ENCODE measurements at regions of chr1 and their contacts with region 1.

Region 1: DNA sequence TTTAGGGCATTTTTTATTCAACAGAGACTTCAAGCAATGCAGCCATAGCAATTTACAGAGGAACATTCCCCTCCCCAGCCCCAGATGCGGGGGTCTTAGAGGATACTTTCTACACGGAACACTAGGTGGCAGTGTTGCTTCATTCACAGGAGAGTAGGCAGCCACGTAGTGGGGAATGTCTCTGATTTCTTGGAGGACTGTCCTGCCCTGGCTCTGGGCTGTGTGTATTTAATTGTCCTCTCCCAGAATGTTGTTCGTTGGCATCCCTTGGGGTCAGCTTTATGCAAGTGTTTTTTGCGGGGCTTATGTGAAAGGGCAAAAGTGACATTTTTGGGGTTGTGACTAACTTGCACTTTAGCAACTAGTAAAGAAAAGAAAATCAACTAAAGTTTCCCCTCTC is 96.9 kb downstream of the PAPPA2 start:
- DNase-seq: peak in 4 of 5 donors; percentile 28 to 51 (median 44)
- ATAC-seq: peak; percentile 88 to 95 (median 90)
- H3K4me3 ChIP-seq: no peak overlapping the region
- H3K27ac ChIP-seq: no peak overlapping the region
- H3K4me1 ChIP-seq: peaks cover 0 to 10% (median 0%) of the 10 kb centered on the region in 12 donors
- H3K27me3 ChIP-seq: peaks cover 0 to 16% (median 0%) of the 10 kb centered on the region in 9 donors
- CTCF ChIP-seq: peak; percentile 75 to 91 (median 84)
- POLR2A ChIP-seq: no peak

Region 2: GRCh38 chr1:176656257-176656995 is 96.5 kb after region 1 on chr1:
- intact Hi-C with region 1: loop called in 6 of 10 experiments (anchors 10 kb)
- DNase-seq: peak in 4 of 5 donors; percentile 36 to 51 (median 46)
- ATAC-seq: peak; percentile 99
- H3K4me3 ChIP-seq: no peak overlapping the region
- H3K27ac ChIP-seq: peak overlapping the region; percentile 73 to 96 (median 86)
- H3K4me1 ChIP-seq: peaks cover 0 to 23% (median 4%) of the 10 kb centered on the region in 12 donors
- H3K27me3 ChIP-seq: no peaks in the 10 kb centered on the region
- CTCF ChIP-seq: peak in 6 of 12 donors; percentile 12 to 46 (median 28)
- POLR2A ChIP-seq: no peak

Region 3: GRCh38 chr1:176843352-176844297 is 283.7 kb after region 1 on chr1:
- intact Hi-C with region 1: loop called (anchors 1 to 5 kb)
- DNase-seq: peak in 3 of 5 donors; percentile 22 to 38 (median 33)
- ATAC-seq: peak; percentile 19 to 55 (median 40)
- H3K4me3 ChIP-seq: no peak overlapping the region
- H3K27ac ChIP-seq: no peak overlapping the region
- H3K4me1 ChIP-seq: peaks cover 0 to 25% (median 2%) of the 10 kb centered on the region in 12 donors
- H3K27me3 ChIP-seq: no peaks in the 10 kb centered on the region
- CTCF ChIP-seq: peak; percentile 42 to 77 (median 61)
- POLR2A ChIP-seq: no peak

Region 4: GRCh38 chr1:176880954-176881595 is 321.2 kb after region 1 on chr1:
- intact Hi-C with region 1: loop called (anchors 1 to 5 kb)
- DNase-seq: peak; percentile 58 to 71 (median 68)
- ATAC-seq: peak; percentile 57 to 92 (median 80)
- H3K4me3 ChIP-seq: no peak overlapping the region
- H3K27ac ChIP-seq: no peak overlapping the region
- H3K4me1 ChIP-seq: peaks cover 0 to 5% (median 0%) of the 10 kb centered on the region in 12 donors
- H3K27me3 ChIP-seq: no peaks in the 10 kb centered on the region
- CTCF ChIP-seq: peak; percentile 69 to 87 (median 79)
- POLR2A ChIP-seq: no peak

Region 5: DNA sequence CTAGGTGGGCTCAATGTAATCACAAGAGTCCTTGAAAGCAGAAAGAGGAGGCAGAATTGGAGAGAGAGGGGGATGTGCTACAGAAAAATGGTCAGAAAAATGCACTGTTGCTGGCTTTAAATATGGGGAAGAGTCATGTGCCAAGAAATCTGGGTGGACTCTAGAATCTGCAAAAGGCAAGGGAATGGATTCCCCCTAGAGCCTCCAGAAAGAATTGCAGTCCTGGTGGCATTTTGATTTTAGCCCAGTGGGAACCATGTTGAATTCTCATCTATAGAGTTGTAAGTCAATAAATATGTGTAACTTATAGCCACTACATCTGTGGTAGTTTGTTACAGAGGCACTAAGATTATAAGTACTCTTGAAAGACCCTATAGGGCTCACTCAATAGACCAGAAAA is 394.4 kb after region 1 on chr1:
- intact Hi-C with region 1: no loop called
- DNase-seq: no peak
- ATAC-seq: no peak
- H3K4me3 ChIP-seq: no peak overlapping the region
- H3K27ac ChIP-seq: no peak overlapping the region
- H3K4me1 ChIP-seq: no peaks in the 10 kb centered on the region
- H3K27me3 ChIP-seq: no peaks in the 10 kb centered on the region
- CTCF ChIP-seq: peak in 3 of 12 donors; percentile 20 to 22 (median 21)
- POLR2A ChIP-seq: no peak